ENCODE measurements at regions of chr17 and their contacts with region 1.

Region 1: DNA sequence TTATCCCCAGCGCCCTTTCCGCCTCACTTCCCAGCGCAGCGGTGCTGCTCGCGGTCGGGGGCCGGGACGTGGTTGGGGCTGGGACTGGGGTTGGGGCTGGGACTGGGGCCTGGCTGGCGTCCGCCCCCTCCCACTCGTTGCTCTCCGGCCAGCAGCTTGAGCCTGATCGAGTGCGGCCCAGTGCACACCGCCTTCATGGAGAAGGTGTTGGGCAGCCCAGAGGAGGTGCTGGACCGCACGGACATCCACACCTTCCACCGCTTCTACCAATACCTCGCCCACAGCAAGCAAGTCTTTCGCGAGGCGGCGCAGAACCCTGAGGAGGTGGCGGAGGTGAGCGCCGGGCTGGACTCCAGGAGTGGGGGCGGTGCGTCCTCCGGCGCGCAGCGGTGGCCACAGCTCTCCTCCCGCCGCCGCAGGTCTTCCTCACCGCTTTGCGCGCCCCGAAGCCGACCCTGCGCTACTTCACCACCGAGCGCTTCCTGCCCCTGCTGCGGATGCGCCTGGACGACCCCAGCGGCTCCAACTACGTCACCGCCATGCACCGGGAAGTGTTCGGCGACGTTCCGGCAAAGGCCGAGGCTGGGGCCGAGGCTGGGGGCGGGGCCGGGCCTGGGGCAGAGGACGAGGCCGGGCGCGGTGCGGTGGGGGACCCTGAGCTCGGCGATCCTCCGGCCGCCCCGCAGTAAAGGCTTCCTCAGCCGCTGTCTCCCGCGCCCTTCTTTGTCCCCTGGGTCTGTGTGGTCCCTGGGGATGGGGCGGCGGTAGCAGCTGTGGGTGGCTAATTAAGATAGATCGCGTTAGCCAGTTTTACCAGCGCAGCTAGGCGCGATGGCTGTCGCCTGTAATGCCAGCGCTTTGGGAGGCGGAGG is 1.8 kb downstream of the HSD17B1 start:
- H3K4me3 ChIP-seq: peak overlapping the region; percentile 68
- H3K27ac ChIP-seq: peak overlapping the region; percentile 95
- H3K4me1 ChIP-seq: peaks cover 5% of the 10 kb centered on the region; the same call in 1 of the 2 replicates
- CTCF ChIP-seq: peak; percentile 73

Region 2: GRCh38 chr17:42541041-42541833 is 13.2 kb before region 1 on chr17:
- CTCF ChIA-PET with region 1: interaction called, 3 read pairs
- POLR2A ChIA-PET with region 1: interaction called, 12 read pairs
- H3K4me3 ChIP-seq: no peak overlapping the region
- H3K27ac ChIP-seq: peak overlapping the region; percentile 29; the same call in 1 of the 2 replicates
- H3K4me1 ChIP-seq: peaks cover 3% of the 10 kb centered on the region; the same call in 1 of the 2 replicates
- CTCF ChIP-seq: no peak

Region 3: GRCh38 chr17:42642336-42642735 is 87.8 kb after region 1 on chr17:
- CTCF ChIA-PET with region 1: no interaction called
- POLR2A ChIA-PET with region 1: no interaction called
- H3K4me3 ChIP-seq: no peak overlapping the region
- H3K27ac ChIP-seq: no peak overlapping the region
- H3K4me1 ChIP-seq: no peaks in the 10 kb centered on the region
- CTCF ChIP-seq: no peak